ENCODE measurements at regions of chr16 and their contacts with region 1.

Region 1: GRCh38 chr16:2911580-2912329 is at the start of gene FLYWCH1:
- DNase-seq: peak; percentile 96 to 98 (median 97)
- H3K4me3 ChIP-seq: peak within 1 kb of the TSS; percentile 96
- H3K4me3 Mint-ChIP-seq: peak within 1 kb of the TSS; percentile 87 to 96 (median 91)
- H3K27ac ChIP-seq: peak within 1 kb of the TSS; percentile 73
- H3K27ac Mint-ChIP-seq: peak within 1 kb of the TSS; percentile 84 to 95 (median 93)
- H3K4me1 ChIP-seq: peaks cover 16% of the 10 kb centered on the region
- H3K4me1 Mint-ChIP-seq: peaks cover 24 to 36% (median 28%) of the 10 kb centered on the region in 3 donors
- H3K27me3 ChIP-seq: no peaks in the 10 kb centered on the region
- H3K27me3 Mint-ChIP-seq: no peaks in the 10 kb centered on the region
- total RNA-seq, gene FLYWCH1: 37.2 to 39.8 TPM

Region 2: DNA sequence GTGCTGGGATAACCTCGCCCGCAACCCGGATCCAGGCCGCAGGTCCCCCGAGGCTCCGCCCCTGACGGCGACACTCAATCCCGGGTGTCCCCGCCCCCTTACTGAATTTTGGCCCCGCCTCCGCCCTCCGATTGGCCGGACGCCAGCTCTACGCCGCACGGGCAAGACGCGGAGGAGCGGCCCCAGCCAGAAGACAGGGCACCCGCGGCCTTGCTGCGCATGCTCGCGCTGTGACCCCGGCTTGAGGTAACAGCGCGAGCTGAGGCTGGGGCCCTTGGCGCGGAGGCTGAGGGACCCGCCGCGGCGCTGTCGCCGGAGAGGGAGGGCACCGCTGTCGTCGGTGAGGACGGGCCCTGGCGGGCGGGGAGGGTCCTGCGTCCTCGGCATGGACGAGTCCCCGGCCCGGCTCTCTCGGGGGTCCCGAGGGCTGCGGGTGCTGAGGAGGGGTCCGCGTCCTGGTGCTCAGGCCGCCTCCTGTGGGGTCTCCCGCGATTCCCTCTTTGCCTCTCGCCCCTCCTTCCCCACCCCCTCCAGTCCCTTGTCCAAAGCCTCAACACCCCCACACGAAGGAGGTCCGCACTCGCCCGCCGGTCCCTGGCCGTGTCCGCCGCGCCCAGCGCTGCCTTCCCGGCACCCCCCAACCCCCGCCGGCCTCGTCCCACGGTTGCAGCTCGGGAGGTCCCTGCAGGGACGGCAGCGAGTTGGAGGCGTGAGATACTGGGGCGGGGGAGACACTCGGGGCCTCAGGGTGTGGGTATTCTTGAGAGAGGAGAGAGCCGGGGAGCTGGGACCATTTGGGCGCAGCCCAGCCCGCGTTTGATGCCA is 28.5 kb before region 1 on chr16 and contains the start of gene FLYWCH2:
- CTCF ChIA-PET with region 1: interaction called, 13 read pairs
- POLR2A ChIA-PET with region 1: interaction called, 33 read pairs
- DNase-seq: peak; percentile 98 to 100 (median 100)
- H3K4me3 ChIP-seq: peak within 1 kb of the TSS; percentile 91
- H3K4me3 Mint-ChIP-seq: peak within 1 kb of the TSS; percentile 85 to 96 (median 93)
- H3K27ac ChIP-seq: peak within 1 kb of the TSS; percentile 88
- H3K27ac Mint-ChIP-seq: peak within 1 kb of the TSS; percentile 87 to 99 (median 97)
- H3K4me1 ChIP-seq: peaks cover 7% of the 10 kb centered on the region
- H3K4me1 Mint-ChIP-seq: peaks cover 11 to 21% (median 14%) of the 10 kb centered on the region in 3 donors
- H3K27me3 ChIP-seq: no peaks in the 10 kb centered on the region
- H3K27me3 Mint-ChIP-seq: no peaks in the 10 kb centered on the region
- total RNA-seq, gene FLYWCH2: 24.7 to 27.2 TPM

Region 3: GRCh38 chr16:2926650-2927646 is 15.2 kb after region 1 on chr16:
- CTCF ChIA-PET with region 1: interaction called, 10 read pairs
- POLR2A ChIA-PET with region 1: no interaction called
- DNase-seq: peak; percentile 75 to 92 (median 82)
- H3K4me3 ChIP-seq: no peak overlapping the region
- H3K4me3 Mint-ChIP-seq: peak overlapping the region in 5 of 7 donors; percentile 2 to 33 (median 20)
- H3K27ac ChIP-seq: no peak overlapping the region
- H3K27ac Mint-ChIP-seq: peak overlapping the region; percentile 0 to 73 (median 26)
- H3K4me1 ChIP-seq: peaks cover 8% of the 10 kb centered on the region
- H3K4me1 Mint-ChIP-seq: peaks cover 12 to 14% (median 14%) of the 10 kb centered on the region in 3 donors
- H3K27me3 ChIP-seq: no peaks in the 10 kb centered on the region
- H3K27me3 Mint-ChIP-seq: peaks cover 0 to under 1% of the 10 kb centered on the region in 2 donors

Measured in CD8-positive, alpha-beta memory T cell (primary cell).